Transverse colon (tissue), 4 donors: ENCODE measurements at regions of chr22 and their contacts with region 1.

Region 1: DNA sequence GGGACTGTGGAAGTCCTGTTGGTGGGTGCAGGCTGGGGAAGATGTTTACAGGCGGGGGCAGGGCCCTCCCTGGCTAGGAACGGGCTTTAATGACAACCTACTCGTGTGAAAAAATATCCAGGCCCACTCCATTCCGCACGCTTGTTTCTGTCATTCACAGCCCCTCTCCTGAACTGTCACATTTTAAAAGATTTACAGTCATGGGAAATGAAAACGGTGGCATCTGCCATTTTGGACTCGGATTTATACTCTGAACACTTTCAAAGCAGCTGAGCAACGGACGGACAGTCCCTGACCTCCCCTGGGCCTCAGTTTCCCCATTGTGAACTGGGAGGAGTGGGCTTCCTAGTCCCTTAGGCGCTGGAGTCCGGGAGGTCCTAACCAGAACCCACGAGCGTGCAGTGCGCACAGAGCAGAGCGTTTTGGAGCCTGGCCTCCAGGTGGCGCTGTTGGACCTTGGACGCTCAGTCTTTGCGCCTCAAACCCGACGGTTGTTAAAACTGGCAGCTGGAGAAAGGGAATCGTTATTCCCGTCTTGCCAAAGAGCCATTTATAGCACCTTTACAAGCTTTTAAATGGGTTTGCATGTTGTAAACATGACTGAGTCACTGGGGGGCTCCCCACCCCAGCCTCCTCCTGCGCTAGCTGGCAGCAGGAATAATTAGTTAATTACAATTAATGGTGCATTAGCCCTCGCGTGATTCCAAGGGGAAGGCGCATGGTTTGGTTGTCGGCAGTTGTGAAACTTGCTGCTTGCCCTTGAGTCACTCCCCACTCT is 75.3 kb downstream of the FBLN1 start:
- DNase-seq: peak; percentile 83
- H3K4me3 ChIP-seq: no peak overlapping the region
- H3K27ac ChIP-seq: no peak overlapping the region
- H3K4me1 ChIP-seq: peaks cover 0 to 9% (median 2%) of the 10 kb centered on the region in 4 donors
- H3K27me3 ChIP-seq: peaks cover 27% of the 10 kb centered on the region
- CTCF ChIP-seq: peak; percentile 90 to 95 (median 93)
- EP300 ChIP-seq: no peak
- POLR2A ChIP-seq: no peak

Region 2: DNA sequence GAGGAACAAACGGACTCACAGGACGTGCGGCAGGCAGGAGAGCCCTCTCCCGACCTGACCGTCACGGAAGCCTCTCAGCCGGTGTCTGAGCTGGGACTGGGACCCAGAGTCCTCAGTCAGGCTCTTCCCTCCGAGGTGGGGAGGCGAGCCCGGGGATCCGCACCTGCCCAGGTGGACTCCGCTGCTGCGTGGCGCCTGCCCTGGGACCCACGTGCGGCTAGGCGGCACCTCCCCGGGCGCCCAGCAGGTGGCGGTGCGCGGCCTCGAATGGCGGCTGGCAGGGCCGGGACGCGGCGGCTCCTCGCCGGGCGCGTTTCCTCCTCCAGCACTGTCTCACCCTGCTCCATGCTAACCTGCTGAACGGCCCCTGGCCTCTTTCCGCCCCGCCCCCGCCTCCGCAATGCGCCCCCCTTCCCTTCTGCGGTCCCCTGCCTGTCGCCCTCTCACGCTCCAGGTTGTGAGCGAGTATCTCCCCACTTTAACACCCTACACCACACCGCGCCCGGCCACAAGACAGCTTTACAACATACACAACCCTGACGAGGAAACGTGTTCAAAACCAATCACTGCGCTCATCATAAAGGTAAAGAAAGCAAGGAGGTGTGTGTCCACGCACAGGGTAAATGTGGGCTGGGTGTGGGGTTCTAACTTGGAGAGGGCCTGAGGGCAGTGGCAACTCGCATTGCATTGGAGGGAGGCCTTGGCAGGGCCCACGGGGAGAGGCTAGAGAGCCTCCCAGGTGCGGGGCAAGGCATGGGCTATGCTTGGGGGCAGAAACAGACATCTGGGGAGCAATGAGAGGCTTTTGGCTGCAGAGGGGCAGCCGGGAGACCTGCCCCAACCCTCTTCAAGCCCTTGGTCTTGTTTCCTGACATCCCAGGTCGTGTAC is 67.8 kb after region 1 on chr22:
- in situ Hi-C with region 1: loop called in 1 of 4 experiments (anchors 10 kb)
- intact Hi-C with region 1: no loop called
- DNase-seq: peak; percentile 81
- H3K4me3 ChIP-seq: peak overlapping the region in 2 of 4 donors; percentile 8 to 19
- H3K27ac ChIP-seq: no peak overlapping the region
- H3K4me1 ChIP-seq: peaks cover 0 to 9% (median 3%) of the 10 kb centered on the region in 4 donors
- H3K27me3 ChIP-seq: peaks cover 40% of the 10 kb centered on the region
- CTCF ChIP-seq: peak; percentile 69 to 98 (median 92)
- EP300 ChIP-seq: no peak
- POLR2A ChIP-seq: no peak

Region 3: DNA sequence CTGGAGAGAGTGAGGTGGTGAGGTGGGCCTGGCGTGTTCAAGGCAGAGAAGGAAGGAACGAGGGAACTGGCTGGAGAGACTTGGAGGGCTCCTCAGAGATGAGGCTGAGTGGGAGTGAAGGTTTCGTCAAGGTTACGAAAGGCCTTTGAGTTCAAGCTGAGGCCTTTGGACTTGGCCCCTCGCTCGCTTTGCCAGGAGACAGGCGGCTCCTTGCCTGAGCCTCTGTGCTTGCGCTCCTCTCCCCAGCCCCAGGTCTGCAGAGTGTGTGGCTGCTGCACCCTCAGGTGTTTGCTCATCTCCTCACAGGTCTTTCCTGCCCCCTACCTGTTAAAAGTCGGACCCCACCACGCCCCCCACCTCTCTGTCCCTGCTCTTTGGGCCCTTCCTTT is 185.3 kb after region 1 on chr22:
- in situ Hi-C with region 1: no loop called
- intact Hi-C with region 1: no loop called
- DNase-seq: no peak
- H3K4me3 ChIP-seq: no peak overlapping the region
- H3K27ac ChIP-seq: no peak overlapping the region
- H3K4me1 ChIP-seq: peaks cover 0 to 3% (median under 1%) of the 10 kb centered on the region in 4 donors
- H3K27me3 ChIP-seq: no peaks in the 10 kb centered on the region
- CTCF ChIP-seq: no peak
- EP300 ChIP-seq: no peak
- POLR2A ChIP-seq: no peak